ENCODE measurements at regions of chrX and their contacts with region 1.

Region 1: GRCh38 chrX:56729152-56729850 is at the start of gene NBDY:
- DNase-seq: peak in 32 of 35 experiments; percentile 1 to 58 (median 19)
- ATAC-seq: peak; percentile 78 to 88 (median 82)
- H3K4me3 ChIP-seq: peak within 1 kb of the TSS; percentile 70 to 83
- H3K4me3 Mint-ChIP-seq: peak within 1 kb of the TSS; percentile 89 to 96 (median 94)
- H3K27ac ChIP-seq: peak within 1 kb of the TSS; percentile 85
- H3K27ac Mint-ChIP-seq: peak within 1 kb of the TSS; percentile 93 to 94
- H3K4me1 ChIP-seq: peaks cover 2 to 4% of the 10 kb centered on the region in 2 experiments
- H3K4me1 Mint-ChIP-seq: peaks cover 18 to 42% (median 30%) of the 10 kb centered on the region in 3 donors
- H3K27me3 ChIP-seq: no peaks in the 10 kb centered on the region
- H3K27me3 Mint-ChIP-seq: peaks cover 0 to 3% of the 10 kb centered on the region in 2 donors
- total RNA-seq, gene NBDY: 28.6 to 39.9 (median 33.8) TPM

Region 2: DNA sequence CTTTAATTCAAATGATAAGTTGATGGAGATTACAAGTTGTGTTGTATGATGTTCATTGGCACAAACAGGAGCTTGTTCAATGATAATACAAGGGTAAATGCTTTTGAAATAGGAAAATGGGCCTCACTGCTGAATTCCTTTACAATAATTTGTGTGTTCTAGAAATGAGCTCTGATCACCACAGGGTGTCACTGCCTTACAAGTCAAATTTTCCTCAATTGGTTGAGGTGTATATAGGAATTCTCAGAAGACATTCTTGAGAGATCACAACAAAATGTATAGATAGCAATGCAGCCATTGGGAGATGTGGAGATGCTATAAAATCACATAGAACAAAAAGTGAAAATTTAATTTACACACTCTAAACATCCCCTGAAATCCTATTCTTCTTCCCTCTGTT is 447.5 kb before region 1 on chrX:
- CTCF ChIA-PET with region 1: interaction called, 37 to 128 read pairs
- POLR2A ChIA-PET with region 1: interaction called in 1 of 2 experiments, 3 read pairs
- DNase-seq: peak in 14 of 35 experiments; percentile 1 to 63 (median 8)
- ATAC-seq: peak; percentile 45 to 67 (median 58)
- H3K4me3 ChIP-seq: no peak overlapping the region
- H3K4me3 Mint-ChIP-seq: no peak overlapping the region
- H3K27ac ChIP-seq: no peak overlapping the region
- H3K27ac Mint-ChIP-seq: peak overlapping the region in 1 of 2 donors; percentile 33
- H3K4me1 ChIP-seq: no peaks in the 10 kb centered on the region
- H3K4me1 Mint-ChIP-seq: peaks cover 0 to 10% (median 8%) of the 10 kb centered on the region in 3 donors
- H3K27me3 ChIP-seq: no peaks in the 10 kb centered on the region
- H3K27me3 Mint-ChIP-seq: peaks cover 0 to 7% of the 10 kb centered on the region in 2 donors

Region 3: GRCh38 chrX:56574861-56575260 is 154.4 kb before region 1 on chrX:
- CTCF ChIA-PET with region 1: no interaction called
- POLR2A ChIA-PET with region 1: no interaction called
- DNase-seq: no peak
- ATAC-seq: no peak
- H3K4me3 ChIP-seq: no peak overlapping the region
- H3K4me3 Mint-ChIP-seq: no peak overlapping the region
- H3K27ac ChIP-seq: no peak overlapping the region
- H3K27ac Mint-ChIP-seq: no peak overlapping the region
- H3K4me1 ChIP-seq: peaks cover 0 to under 1% of the 10 kb centered on the region in 2 experiments
- H3K4me1 Mint-ChIP-seq: peaks cover 26 to 73% (median 52%) of the 10 kb centered on the region in 3 donors
- H3K27me3 ChIP-seq: no peaks in the 10 kb centered on the region
- H3K27me3 Mint-ChIP-seq: peaks cover 0 to 10% of the 10 kb centered on the region in 2 donors

Measured in T-cell (primary cell).